Dorsolateral prefrontal cortex (tissue), 120 donors: ENCODE measurements at regions of chr17 and their contacts with region 1.

Region 1: GRCh38 chr17:78168242-78168902 is at the start of gene SYNGR2:
- DNase-seq: peak; percentile 59 to 89 (median 75)
- H3K4me3 ChIP-seq: peak within 1 kb of the TSS; percentile 47 to 96 (median 73)
- H3K27ac ChIP-seq: peak within 1 kb of the TSS; percentile 61 to 95 (median 89)
- H3K27me3 ChIP-seq: no peaks in the 10 kb centered on the region
- CTCF ChIP-seq: peak in 24 of 56 donors; percentile 9 to 45 (median 19)
- total RNA-seq, gene SYNGR2: 19.6 to 122 (median 45.6) TPM

Region 2: DNA sequence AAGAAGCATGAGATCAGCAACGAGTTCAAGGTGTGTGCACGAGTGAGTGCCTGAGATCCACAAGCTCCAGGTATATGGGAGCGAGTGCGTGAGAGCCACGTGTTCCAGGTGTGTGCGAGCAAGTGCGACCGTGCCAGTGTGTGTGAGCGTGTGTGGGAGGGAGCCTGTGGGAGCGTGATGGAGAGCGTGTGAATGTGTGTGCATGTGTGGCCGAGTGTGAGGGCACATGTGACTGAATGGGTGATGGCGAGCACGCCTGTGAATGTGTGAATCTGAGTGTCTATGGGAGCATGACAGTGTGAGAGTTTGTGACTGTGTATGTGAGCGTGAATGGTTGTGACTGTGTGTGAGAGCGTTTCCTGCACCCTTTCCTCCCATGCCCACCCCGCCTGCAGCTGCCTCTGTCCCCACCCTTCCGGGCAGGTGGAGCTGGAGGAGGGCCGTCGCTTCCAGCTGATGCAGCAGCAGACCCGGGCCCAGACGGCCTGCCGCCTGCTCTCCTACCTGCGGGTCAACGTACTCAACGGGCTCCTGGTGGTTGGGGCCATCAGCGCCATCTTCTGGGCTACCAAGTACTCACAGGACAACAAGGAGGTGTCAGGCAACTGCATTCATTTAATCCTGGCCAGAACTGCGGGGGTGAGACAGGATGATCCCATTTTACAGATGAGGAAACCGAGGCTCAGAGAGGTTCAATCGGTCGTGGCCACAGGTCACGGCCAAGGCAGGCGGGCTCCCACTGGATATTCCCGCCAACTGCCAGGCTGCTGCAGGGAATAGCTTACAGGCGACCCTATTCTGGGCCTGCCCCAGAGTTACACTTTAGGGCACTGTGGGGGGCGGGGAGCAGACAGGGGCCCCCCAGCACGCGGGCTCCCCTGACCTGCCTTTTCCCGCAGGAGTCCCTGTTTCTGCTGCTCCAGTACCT is 34.1 kb before region 1 on chr17:
- intact Hi-C with region 1: loop called (anchors 5 kb)
- DNase-seq: peak in 3 of 10 donors; percentile 53 to 62 (median 56)
- H3K4me3 ChIP-seq: no peak overlapping the region
- H3K27ac ChIP-seq: peak overlapping the region in 17 of 59 donors; percentile 9 to 100 (median 99)
- H3K27me3 ChIP-seq: peaks cover 0 to 12% (median 0%) of the 10 kb centered on the region in 45 donors
- CTCF ChIP-seq: peak in 54 of 56 donors; percentile 4 to 72 (median 54)